Endothelial cell of umbilical vein (primary cell): ENCODE measurements at regions of chr12 and their contacts with region 1.

Region 1: DNA sequence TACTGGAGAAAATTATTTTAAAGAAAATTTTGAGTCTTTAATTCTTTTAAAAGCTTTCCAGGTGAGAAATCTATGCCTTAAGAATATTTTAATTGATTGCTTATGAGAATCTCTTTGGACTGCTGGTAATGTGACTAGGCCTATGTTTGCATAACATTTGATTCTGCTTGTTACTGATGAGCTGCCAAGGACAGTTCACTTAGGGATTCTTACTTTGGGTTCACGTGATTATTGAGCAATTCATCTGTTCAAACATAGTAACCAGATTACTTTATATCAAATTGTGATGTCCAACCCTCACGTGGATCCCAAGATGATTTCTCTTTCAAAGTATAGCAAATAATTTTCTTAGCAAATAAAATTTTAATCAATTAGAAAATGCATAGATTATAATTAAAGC is 27.4 kb upstream of the ABCD2 start:
- DNase-seq: no peak
- H3K4me3 ChIP-seq: no peak overlapping the region
- H3K27ac ChIP-seq: no peak overlapping the region
- H3K4me1 ChIP-seq: no peaks in the 10 kb centered on the region
- H3K27me3 ChIP-seq: peaks cover 0 to 5% of the 10 kb centered on the region in 2 experiments
- CTCF ChIP-seq: no peak
- POLR2A ChIP-seq: no peak

Region 2: GRCh38 chr12:39503445-39503844 is 143.5 kb before region 1 on chr12:
- CTCF ChIA-PET with region 1: no interaction called
- POLR2A ChIA-PET with region 1: no interaction called
- dilution Hi-C with region 1: no loop called
- intact Hi-C with region 1: loop called (anchors 10 kb)
- DNase-seq: peak; percentile 48
- H3K4me3 ChIP-seq: no peak overlapping the region
- H3K27ac ChIP-seq: no peak overlapping the region
- H3K4me1 ChIP-seq: peaks cover 7% of the 10 kb centered on the region
- H3K27me3 ChIP-seq: no peaks in the 10 kb centered on the region
- CTCF ChIP-seq: peak in 1 of 2 donors; percentile 12
- POLR2A ChIP-seq: no peak